Right cardiac atrium (tissue), 5 donors: ENCODE measurements at regions of chr1 and their contacts with region 1.

Region 1: GRCh38 chr1:155084722-155085503 is 6.3 kb downstream of the EFNA3 start:
- DNase-seq: peak; percentile 93 to 98 (median 96)
- ATAC-seq: peak; percentile 91 to 92
- H3K4me3 ChIP-seq: peak overlapping the region; percentile 76
- H3K27ac ChIP-seq: peak overlapping the region; percentile 89
- H3K4me1 ChIP-seq: peaks cover 3% of the 10 kb centered on the region
- H3K27me3 ChIP-seq: no peaks in the 10 kb centered on the region

Region 2: DNA sequence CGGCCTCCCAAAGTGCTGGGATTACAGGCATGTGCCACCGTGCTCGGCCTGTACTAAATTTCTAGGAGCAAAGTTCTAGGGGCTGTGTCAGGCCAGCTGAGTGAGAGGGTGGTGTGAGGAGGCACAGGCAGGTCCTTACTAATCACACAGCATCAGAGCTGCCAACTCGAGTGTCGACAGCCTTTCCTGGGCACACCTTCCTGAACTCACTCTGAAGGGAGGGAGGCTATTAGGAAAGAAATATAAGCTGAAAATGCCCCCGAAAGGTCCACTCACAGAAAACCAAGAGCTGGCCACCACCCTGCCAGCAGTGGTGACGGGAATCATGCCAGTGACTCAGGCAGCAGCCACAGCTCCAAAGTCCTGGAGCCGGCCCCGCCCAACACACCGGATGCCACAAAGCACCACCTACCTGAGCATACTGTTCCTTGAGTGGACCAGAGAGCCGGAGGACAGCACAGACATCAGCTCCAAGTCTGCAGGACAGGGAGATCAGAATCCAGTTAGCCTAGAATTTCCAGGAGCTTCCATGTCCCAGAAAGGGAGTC is 152.9 kb before region 1 on chr1:
- intact Hi-C with region 1: no loop called
- DNase-seq: no peak
- ATAC-seq: no peak
- H3K4me3 ChIP-seq: no peak overlapping the region
- H3K27ac ChIP-seq: no peak overlapping the region
- H3K4me1 ChIP-seq: peaks cover 3% of the 10 kb centered on the region
- H3K27me3 ChIP-seq: no peaks in the 10 kb centered on the region

Region 3: DNA sequence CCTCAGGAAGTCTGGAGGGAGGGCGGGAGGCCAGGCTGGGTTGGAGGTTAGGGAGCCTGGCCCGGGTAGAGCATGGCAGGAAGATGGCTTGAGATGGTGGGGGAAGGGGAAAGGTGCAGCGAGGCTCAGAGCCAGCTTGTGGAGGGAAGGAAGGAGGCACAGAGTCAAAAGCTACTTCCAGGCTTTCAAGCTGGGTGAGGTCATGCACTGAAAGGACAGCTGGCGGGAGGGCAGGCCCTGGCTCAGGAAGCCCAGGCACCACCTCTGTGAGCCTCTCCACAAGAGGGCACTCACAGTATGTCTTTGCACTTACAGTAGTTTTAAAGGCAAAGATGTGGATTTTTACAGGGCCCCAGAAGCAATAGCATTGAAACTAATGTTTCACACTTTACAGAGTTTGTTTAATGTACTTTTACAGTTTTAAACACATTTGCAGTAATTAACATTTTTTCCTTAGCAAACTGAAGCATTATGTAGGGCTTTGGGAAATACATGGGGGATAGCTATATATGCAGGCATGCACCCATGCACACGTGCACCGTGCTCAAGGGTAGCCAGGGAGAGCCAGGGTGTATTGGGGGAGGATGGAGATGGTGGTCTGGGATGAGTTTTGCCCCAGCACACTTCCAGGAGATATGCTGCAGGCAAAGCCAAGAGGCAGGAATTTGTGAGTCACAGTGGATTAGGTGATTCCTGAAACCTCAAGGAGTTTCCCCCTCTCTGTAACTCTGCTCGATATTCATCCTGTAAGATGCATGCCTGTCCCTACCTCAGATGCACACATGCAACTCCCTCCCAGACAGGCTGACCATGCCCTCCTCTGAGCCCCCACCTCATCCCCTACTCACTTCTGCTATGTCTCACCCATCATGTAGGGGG is 39.9 kb before region 1 on chr1:
- intact Hi-C with region 1: loop called in 1 of 4 experiments (anchors 5 kb)
- DNase-seq: peak; percentile 83 to 91 (median 88)
- ATAC-seq: peak; percentile 85 to 87
- H3K4me3 ChIP-seq: no peak overlapping the region
- H3K27ac ChIP-seq: no peak overlapping the region
- H3K4me1 ChIP-seq: peaks cover 6% of the 10 kb centered on the region
- H3K27me3 ChIP-seq: no peaks in the 10 kb centered on the region